H1 (cell line): ENCODE measurements at regions of chr11 and their contacts with region 1.

Region 1: GRCh38 chr11:30914143-30914762 is 328.1 kb upstream of the MPPED2 start:
- DNase-seq: peak; percentile 58 to 69
- H3K4me3 ChIP-seq: no peak overlapping the region
- H3K27ac ChIP-seq: no peak overlapping the region
- H3K4me1 ChIP-seq: no peaks in the 10 kb centered on the region
- H3K27me3 ChIP-seq: no peaks in the 10 kb centered on the region
- CTCF ChIP-seq: peak; percentile 81 to 91 (median 86)
- EP300 ChIP-seq: no peak
- POLR2A ChIP-seq: no peak
- RAD21 ChIP-seq: peak; percentile 87 to 89

Region 2: DNA sequence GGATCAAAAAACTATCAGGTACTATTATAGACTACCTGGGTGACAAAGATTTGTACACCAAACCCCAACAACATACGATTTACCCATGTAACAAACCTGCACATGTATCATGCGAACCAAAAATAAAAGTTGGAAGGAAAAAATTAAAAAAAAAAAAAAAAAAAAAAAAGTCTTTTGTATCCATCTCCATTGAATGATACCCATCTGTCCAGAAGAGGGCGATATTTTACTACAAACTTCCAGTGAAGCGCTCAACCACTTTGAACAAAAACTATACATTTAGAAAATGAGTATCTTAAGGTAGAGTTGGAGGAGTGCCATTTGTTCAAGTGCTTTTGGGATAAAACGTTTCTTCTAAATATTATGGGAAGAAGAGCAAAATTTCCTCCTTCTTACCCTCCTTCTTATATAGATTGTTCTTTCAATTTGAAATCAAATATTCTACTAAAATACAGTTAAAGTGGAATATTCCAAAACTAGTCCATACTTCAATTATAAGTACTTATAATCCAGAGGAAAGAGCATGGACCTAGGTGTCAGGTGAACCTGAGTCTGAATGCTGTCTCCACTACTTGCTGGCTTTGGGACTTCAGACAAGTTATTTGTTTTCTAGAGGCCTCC is 568.1 kb before region 1 on chr11:
- CTCF ChIA-PET with region 1: interaction called, 32 read pairs
- POLR2A ChIA-PET with region 1: no interaction called
- DNase-seq: no peak
- H3K4me3 ChIP-seq: no peak overlapping the region
- H3K27ac ChIP-seq: no peak overlapping the region
- H3K4me1 ChIP-seq: no peaks in the 10 kb centered on the region
- H3K27me3 ChIP-seq: no peaks in the 10 kb centered on the region
- CTCF ChIP-seq: peak in 2 of 3 experiments; percentile 30 to 49; a peak in 2 of 4 replicates
- EP300 ChIP-seq: no peak
- POLR2A ChIP-seq: no peak
- RAD21 ChIP-seq: peak; percentile 78 to 85

Region 3: DNA sequence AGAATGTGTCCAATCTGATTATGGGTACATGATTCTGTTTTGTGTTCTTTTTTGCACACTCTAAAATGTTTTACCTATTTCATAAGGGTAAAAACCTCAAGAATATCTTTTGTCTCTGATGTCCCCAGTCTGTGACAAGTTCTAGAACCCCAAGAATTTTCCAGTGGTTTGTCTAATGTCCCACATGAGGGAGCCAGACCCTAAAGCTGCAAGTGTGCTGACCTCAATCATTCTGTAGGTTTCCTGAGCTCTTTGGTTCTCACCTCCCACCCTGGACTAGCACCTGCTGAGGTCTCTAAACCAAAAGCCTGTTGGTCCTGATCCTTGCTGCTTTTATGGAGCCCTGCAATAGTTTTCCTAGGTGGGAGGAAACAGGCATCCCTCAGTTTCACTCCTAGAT is 178.3 kb before region 1 on chr11:
- CTCF ChIA-PET with region 1: interaction called, 11 read pairs
- POLR2A ChIA-PET with region 1: no interaction called
- DNase-seq: no peak
- H3K4me3 ChIP-seq: no peak overlapping the region
- H3K27ac ChIP-seq: no peak overlapping the region
- H3K4me1 ChIP-seq: no peaks in the 10 kb centered on the region
- H3K27me3 ChIP-seq: no peaks in the 10 kb centered on the region
- CTCF ChIP-seq: peak in 2 of 3 experiments; percentile 34 to 49; a peak in 3 of 4 replicates
- EP300 ChIP-seq: no peak
- POLR2A ChIP-seq: no peak
- RAD21 ChIP-seq: peak; percentile 69 to 79

Region 4: DNA sequence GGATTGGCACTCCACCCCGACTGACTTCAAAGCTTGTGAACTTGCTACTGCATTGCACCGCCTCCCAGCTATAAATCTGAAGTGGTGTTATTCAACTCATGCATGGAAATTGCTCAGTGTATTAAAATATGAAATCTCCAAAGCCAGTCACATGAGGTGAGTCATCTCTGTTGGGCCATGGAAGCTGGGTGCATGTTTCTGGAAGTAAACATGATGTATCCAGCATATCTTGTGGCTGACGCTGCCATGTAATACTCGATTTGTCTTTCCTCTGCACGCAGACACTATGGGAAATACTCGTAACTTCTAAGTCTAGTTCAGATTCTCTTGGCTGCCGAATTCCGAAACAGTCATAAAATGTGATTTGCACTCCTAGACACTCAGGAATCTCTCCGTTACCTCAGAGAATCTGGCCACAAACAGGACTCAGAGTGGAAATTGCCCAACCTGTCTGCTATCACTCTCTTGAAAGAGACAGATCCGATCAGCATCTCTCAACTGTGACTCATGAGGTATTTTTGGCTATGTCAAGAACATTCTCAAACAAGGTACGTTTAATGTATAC is 173.1 kb before region 1 on chr11:
- CTCF ChIA-PET with region 1: interaction called, 12 read pairs
- POLR2A ChIA-PET with region 1: no interaction called
- DNase-seq: no peak
- H3K4me3 ChIP-seq: no peak overlapping the region
- H3K27ac ChIP-seq: no peak overlapping the region
- H3K4me1 ChIP-seq: no peaks in the 10 kb centered on the region
- H3K27me3 ChIP-seq: no peaks in the 10 kb centered on the region
- CTCF ChIP-seq: no peak
- EP300 ChIP-seq: no peak
- POLR2A ChIP-seq: no peak
- RAD21 ChIP-seq: no peak

Region 5: DNA sequence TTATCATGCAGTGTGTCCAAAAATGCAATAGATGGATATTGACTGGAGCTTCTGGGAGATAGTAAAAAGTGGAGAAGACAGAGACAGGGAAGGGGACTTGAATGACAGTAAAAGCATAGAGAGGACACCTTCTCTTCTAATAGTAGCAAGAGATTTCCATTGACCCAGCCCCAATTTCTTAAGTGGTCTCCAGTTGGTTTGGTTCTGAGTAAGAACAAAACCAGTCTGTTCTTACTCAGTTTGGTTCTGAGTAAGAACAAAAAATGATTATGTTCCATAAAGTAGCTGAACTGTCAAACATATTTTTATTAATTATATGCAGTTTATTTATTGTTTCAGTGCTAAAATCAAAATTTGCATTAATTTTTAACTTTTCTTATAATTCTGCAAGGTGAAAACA is 11.3 kb before region 1 on chr11:
- CTCF ChIA-PET with region 1: interaction called, 10 read pairs
- POLR2A ChIA-PET with region 1: no interaction called
- DNase-seq: no peak
- H3K4me3 ChIP-seq: no peak overlapping the region
- H3K27ac ChIP-seq: no peak overlapping the region
- H3K4me1 ChIP-seq: no peaks in the 10 kb centered on the region
- H3K27me3 ChIP-seq: no peaks in the 10 kb centered on the region
- CTCF ChIP-seq: no peak
- EP300 ChIP-seq: no peak
- POLR2A ChIP-seq: no peak
- RAD21 ChIP-seq: no peak